ENCODE measurements at regions of chr9 and their contacts with region 1.

Region 1: DNA sequence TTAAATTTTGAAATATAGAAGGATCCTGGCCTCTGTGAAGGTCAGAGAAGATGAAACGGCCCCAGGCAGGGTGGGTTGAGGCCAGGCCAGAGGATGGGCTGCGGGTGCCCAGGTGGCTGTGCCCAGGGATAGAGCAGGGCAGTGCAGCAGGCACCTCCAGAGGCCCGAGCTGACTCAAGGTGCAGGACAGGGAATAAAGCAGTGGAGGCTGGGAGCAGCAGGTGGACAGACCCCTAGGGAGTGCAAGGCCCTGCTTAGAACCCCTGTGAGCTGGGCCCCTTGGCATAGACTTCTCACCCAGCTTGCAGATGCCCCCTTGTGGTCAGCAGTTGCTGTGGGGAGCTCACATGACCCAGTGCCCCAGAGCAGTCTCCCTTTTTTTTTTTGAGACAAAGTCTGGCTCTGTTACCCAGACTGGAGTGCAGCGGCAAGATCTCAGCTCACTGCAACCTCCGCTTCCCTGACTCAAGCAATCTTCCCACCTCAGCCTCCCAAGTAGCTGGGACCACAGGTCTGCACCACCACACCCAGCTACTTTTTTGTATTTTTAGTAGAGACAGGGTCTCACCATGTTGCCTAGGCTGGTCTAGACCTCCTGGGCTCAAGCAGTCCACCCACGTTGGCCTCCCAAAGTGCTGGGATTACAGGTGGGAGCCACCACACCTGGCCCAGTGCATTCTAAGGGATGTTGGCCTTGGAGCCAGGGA is 118.8 kb downstream of the WNK2 start:
- DNase-seq: peak in 1 of 2 experiments; percentile 73
- H3K4me3 ChIP-seq: no peak overlapping the region
- H3K27ac ChIP-seq: no peak overlapping the region
- H3K4me1 ChIP-seq: peaks cover 0 to 3% (median 0%) of the 10 kb centered on the region in 4 experiments; a peak in 1 of 7 replicates
- H3K27me3 ChIP-seq: no peaks in the 10 kb centered on the region
- CTCF ChIP-seq: peak in 2 of 3 experiments; percentile 68 to 71; a peak in 3 of 4 replicates
- EP300 ChIP-seq: no peak
- POLR2A ChIP-seq: no peak
- RAD21 ChIP-seq: peak; percentile 56 to 66

Region 2: GRCh38 chr9:93154315-93154903 is 148.3 kb before region 1 on chr9:
- CTCF ChIA-PET with region 1: interaction called, 35 read pairs
- POLR2A ChIA-PET with region 1: no interaction called
- DNase-seq: peak in 1 of 2 experiments; percentile 84
- H3K4me3 ChIP-seq: no peak overlapping the region
- H3K27ac ChIP-seq: no peak overlapping the region
- H3K4me1 ChIP-seq: no peaks in the 10 kb centered on the region
- H3K27me3 ChIP-seq: no peaks in the 10 kb centered on the region
- CTCF ChIP-seq: peak; percentile 82 to 89 (median 89)
- EP300 ChIP-seq: no peak
- POLR2A ChIP-seq: no peak
- RAD21 ChIP-seq: peak; percentile 71 to 77

Region 3: GRCh38 chr9:93182572-93182971 is 120.1 kb before region 1 on chr9:
- CTCF ChIA-PET with region 1: interaction called, 21 read pairs
- POLR2A ChIA-PET with region 1: no interaction called
- DNase-seq: no peak
- H3K4me3 ChIP-seq: no peak overlapping the region
- H3K27ac ChIP-seq: no peak overlapping the region
- H3K4me1 ChIP-seq: peaks cover 0 to 16% (median 7%) of the 10 kb centered on the region in 4 experiments; a peak in 6 of 7 replicates
- H3K27me3 ChIP-seq: peaks cover 0 to 43% (median 27%) of the 10 kb centered on the region in 4 experiments; a peak in 6 of 7 replicates
- CTCF ChIP-seq: no peak
- EP300 ChIP-seq: no peak
- POLR2A ChIP-seq: no peak
- RAD21 ChIP-seq: no peak

Region 4: GRCh38 chr9:93288891-93289883 is 13.5 kb before region 1 on chr9:
- CTCF ChIA-PET with region 1: interaction called, 40 read pairs
- POLR2A ChIA-PET with region 1: interaction called, 4 read pairs
- DNase-seq: peak in 1 of 2 experiments; percentile 47
- H3K4me3 ChIP-seq: no peak overlapping the region
- H3K27ac ChIP-seq: no peak overlapping the region
- H3K4me1 ChIP-seq: no peaks in the 10 kb centered on the region
- H3K27me3 ChIP-seq: no peaks in the 10 kb centered on the region
- CTCF ChIP-seq: peak in 2 of 3 experiments; percentile 9 to 13; a peak in 2 of 4 replicates
- EP300 ChIP-seq: no peak
- POLR2A ChIP-seq: no peak
- RAD21 ChIP-seq: no peak

Region 5: GRCh38 chr9:93488244-93488643 is 185.5 kb after region 1 on chr9:
- CTCF ChIA-PET with region 1: no interaction called
- POLR2A ChIA-PET with region 1: no interaction called
- DNase-seq: no peak
- H3K4me3 ChIP-seq: no peak overlapping the region
- H3K27ac ChIP-seq: no peak overlapping the region
- H3K4me1 ChIP-seq: no peaks in the 10 kb centered on the region
- H3K27me3 ChIP-seq: no peaks in the 10 kb centered on the region
- CTCF ChIP-seq: no peak
- EP300 ChIP-seq: no peak
- POLR2A ChIP-seq: no peak
- RAD21 ChIP-seq: no peak